HEK293 (cell line): ENCODE measurements at regions of chr21 and their contacts with region 1.

Region 1: GRCh38 chr21:36661511-36662309 is 37.2 kb upstream of the SIM2 start:
- H3K4me3 ChIP-seq: no peak overlapping the region
- H3K27ac ChIP-seq: no peak overlapping the region
- H3K4me1 ChIP-seq: no peaks in the 10 kb centered on the region
- CTCF ChIP-seq: peak; percentile 30; the same call in 1 of the 2 replicates

Region 2: GRCh38 chr21:36845070-36845469 is 183.4 kb after region 1 on chr21:
- CTCF ChIA-PET with region 1: no interaction called
- POLR2A ChIA-PET with region 1: no interaction called
- H3K4me3 ChIP-seq: no peak overlapping the region
- H3K27ac ChIP-seq: no peak overlapping the region
- H3K4me1 ChIP-seq: peaks cover 7% of the 10 kb centered on the region
- CTCF ChIP-seq: no peak

Region 3: DNA sequence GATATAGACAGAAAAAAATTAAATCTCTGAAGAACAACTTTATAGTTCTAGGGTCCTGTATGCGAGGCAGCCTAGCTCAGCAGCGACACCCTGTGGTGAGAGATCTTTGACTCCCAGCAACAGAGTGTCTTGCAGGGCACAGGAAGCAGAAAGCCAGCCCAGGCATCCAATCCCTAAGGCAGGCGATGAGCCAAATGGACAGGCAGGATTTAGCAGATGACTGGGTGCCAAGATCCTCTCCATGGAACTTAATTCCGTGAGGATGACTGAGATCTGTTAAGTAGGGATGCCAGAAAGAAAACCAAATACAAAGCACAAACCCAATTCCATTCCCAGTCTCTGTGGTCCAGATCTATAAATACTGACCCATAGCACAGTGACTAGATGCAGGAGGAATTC is 266.0 kb after region 1 on chr21:
- CTCF ChIA-PET with region 1: interaction called, 12 read pairs
- POLR2A ChIA-PET with region 1: no interaction called
- H3K4me3 ChIP-seq: no peak overlapping the region
- H3K27ac ChIP-seq: no peak overlapping the region
- H3K4me1 ChIP-seq: peaks cover 5% of the 10 kb centered on the region
- CTCF ChIP-seq: peak; percentile 82